PC-3 (cell line): ENCODE measurements at regions of chr13 and their contacts with region 1.

Region 1: GRCh38 chr13:47066226-47066625 is 169.4 kb upstream of the HTR2A start:
- DNase-seq: no peak
- ATAC-seq: no peak
- H3K4me3 ChIP-seq: no peak overlapping the region
- H3K27ac ChIP-seq: no peak overlapping the region
- H3K4me1 ChIP-seq: no peaks in the 10 kb centered on the region
- H3K27me3 ChIP-seq: no peaks in the 10 kb centered on the region
- CTCF ChIP-seq: no peak

Region 2: GRCh38 chr13:47117268-47117667 is 51.0 kb after region 1 on chr13:
- CTCF ChIA-PET with region 1: no interaction called
- POLR2A ChIA-PET with region 1: no interaction called
- intact Hi-C with region 1: no loop called
- DNase-seq: peak; percentile 68
- ATAC-seq: peak; percentile 76
- H3K4me3 ChIP-seq: peak overlapping the region; percentile 4; the same call in 1 of the 2 replicates
- H3K27ac ChIP-seq: peak overlapping the region; percentile 62
- H3K4me1 ChIP-seq: peaks cover 54% of the 10 kb centered on the region
- H3K27me3 ChIP-seq: no peaks in the 10 kb centered on the region
- CTCF ChIP-seq: no peak

Region 3: GRCh38 chr13:47186471-47186870 is 120.2 kb after region 1 on chr13:
- CTCF ChIA-PET with region 1: no interaction called
- POLR2A ChIA-PET with region 1: interaction called, 13 read pairs
- intact Hi-C with region 1: no loop called
- DNase-seq: no peak
- ATAC-seq: peak; percentile 20
- H3K4me3 ChIP-seq: no peak overlapping the region
- H3K27ac ChIP-seq: no peak overlapping the region
- H3K4me1 ChIP-seq: peaks cover 10% of the 10 kb centered on the region
- H3K27me3 ChIP-seq: no peaks in the 10 kb centered on the region
- CTCF ChIP-seq: no peak

Region 4: GRCh38 chr13:47250146-47250545 is 183.9 kb after region 1 on chr13:
- CTCF ChIA-PET with region 1: no interaction called
- POLR2A ChIA-PET with region 1: no interaction called
- intact Hi-C with region 1: no loop called
- DNase-seq: peak; percentile 71
- ATAC-seq: peak; percentile 78
- H3K4me3 ChIP-seq: no peak overlapping the region
- H3K27ac ChIP-seq: peak overlapping the region; percentile 94
- H3K4me1 ChIP-seq: peaks cover 24% of the 10 kb centered on the region
- H3K27me3 ChIP-seq: no peaks in the 10 kb centered on the region
- CTCF ChIP-seq: no peak